ENCODE measurements at regions of chr2 and their contacts with region 1.

Region 1: GRCh38 chr2:70124983-70125480 is 37.8 kb downstream of the PCBP1 start:
- DNase-seq: peak; percentile 61 to 84 (median 68)
- ATAC-seq: peak; percentile 49 to 70 (median 60)
- H3K4me3 ChIP-seq: peak overlapping the region; percentile 29 to 51 (median 40)
- H3K27ac ChIP-seq: peak overlapping the region; percentile 97 to 100 (median 100)
- H3K4me1 ChIP-seq: peaks cover 0 to 8% (median 0%) of the 10 kb centered on the region in 3 donors
- H3K27me3 ChIP-seq: no peaks in the 10 kb centered on the region
- CTCF ChIP-seq: no peak

Region 2: DNA sequence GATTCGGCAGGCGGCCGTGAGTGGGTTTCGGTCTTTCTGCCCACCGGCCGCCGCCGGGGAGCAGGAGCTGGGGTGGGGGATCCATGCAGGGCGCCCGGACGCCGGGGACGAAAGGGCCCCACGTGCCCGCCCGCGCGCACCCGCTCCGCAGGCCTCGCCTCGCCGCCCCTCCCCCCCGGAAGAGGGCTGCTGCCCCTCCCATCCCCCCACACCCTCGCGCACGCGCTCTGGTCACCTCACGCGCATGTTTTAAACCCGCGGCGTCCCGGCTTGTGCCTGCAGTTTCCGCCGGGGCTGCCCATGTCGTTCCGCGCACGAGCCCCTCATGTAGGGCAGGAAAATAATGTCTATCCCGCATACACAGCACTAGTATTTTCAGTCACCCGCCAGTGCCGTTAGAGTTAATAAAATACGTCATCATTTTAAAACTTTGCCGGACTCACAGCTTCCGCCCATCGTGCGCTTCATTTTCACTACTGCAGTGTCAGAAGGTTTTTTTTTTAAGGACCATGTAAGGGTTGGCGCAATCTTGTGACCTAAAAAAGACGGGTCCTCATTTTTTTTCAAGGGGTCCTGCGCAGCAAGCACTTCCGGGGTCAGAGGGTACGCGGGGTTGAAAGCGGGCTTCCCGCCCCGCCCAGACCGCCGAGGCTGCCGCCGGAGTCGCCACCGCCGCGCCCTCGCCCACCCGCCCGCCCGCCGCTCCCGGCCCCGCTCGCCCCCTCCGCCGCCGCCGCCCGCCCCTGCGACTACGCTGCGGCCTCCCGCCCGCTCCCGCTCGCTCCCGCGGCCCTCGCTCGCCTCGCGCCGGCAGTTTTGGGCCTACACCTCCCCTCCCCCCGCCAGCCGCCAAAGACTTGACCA is 38.0 kb before region 1 on chr2 and contains the start of gene PCBP1:
- intact Hi-C with region 1: loop called in 1 of 3 experiments (anchors 5 kb)
- DNase-seq: peak; percentile 94 to 100 (median 96)
- ATAC-seq: peak; percentile 75 to 87 (median 86)
- H3K4me3 ChIP-seq: peak within 1 kb of the TSS; percentile 76 to 91 (median 82)
- H3K27ac ChIP-seq: peak within 1 kb of the TSS; percentile 100
- H3K4me1 ChIP-seq: peaks cover 20 to 29% (median 28%) of the 10 kb centered on the region in 3 donors
- H3K27me3 ChIP-seq: no peaks in the 10 kb centered on the region
- CTCF ChIP-seq: no peak
- total RNA-seq, gene PCBP1: 121 to 232 (median 177) TPM

Measured in pancreas (tissue), 10 donors.